ENCODE measurements at regions of chr18 and their contacts with region 1.

Region 1: GRCh38 chr18:67515945-67516538 is 478 bp downstream of the DSEL start:
- DNase-seq: peak; percentile 88
- H3K4me3 ChIP-seq: peak overlapping the region; percentile 85
- H3K27ac ChIP-seq: peak overlapping the region; percentile 90
- H3K4me1 ChIP-seq: peaks cover 8% of the 10 kb centered on the region
- H3K27me3 ChIP-seq: no peaks in the 10 kb centered on the region
- CTCF ChIP-seq: peak; percentile 79

Region 2: DNA sequence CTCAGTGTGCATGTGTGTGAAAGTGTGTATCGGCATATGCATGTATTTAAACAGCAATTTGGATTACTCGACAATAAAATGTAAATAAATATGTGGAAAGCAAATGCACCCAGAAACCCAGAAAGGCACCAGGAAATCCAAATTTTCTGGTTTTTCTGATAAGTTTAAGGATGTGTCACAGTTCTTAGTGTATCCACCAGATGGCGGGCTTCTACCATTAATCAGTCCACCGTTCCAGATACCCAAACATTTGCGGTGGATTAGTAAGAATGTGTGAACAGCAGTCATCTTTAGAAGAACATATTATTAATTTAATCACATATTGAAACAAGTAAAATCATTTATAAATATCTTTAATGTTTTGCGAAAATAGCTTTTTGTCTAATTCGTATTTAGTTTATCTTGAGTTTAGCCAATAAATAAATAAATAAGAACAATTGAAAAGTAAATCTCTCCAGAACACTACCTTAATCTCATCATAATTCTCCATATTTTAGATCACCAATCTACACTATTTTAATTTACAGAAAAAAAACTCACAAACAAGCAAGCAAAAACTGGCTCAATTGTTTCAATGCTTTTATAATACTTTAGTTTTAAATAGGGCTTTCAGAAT is 298.4 kb before region 1 on chr18:
- CTCF ChIA-PET with region 1: interaction called, 3 read pairs
- POLR2A ChIA-PET with region 1: no interaction called
- intact Hi-C with region 1: loop called (anchors 5 kb)
- DNase-seq: peak; percentile 77
- H3K4me3 ChIP-seq: no peak overlapping the region
- H3K27ac ChIP-seq: no peak overlapping the region
- H3K4me1 ChIP-seq: peaks cover 16% of the 10 kb centered on the region
- H3K27me3 ChIP-seq: no peaks in the 10 kb centered on the region
- CTCF ChIP-seq: peak; percentile 73

Region 3: DNA sequence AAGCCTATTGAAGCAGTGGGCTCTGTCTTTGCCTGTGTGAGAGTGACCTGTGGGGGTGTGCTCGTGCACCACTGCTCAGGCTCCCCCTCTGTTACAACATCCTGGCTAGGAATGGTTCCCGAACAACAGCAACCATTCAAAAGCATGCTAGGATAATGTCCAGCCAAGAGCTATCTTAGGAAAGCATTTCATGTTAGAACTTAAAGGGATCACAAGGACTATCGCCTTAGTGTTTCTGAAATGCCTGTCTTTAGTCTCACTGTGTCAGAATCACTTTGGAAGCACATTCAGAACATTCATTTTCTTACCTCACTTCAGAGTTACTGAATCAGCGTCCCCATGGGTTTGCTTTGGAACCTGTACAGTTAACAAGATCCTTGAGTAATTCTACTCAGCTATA is 135.4 kb after region 1 on chr18:
- CTCF ChIA-PET with region 1: no interaction called
- POLR2A ChIA-PET with region 1: no interaction called
- intact Hi-C with region 1: no loop called
- DNase-seq: no peak
- H3K4me3 ChIP-seq: no peak overlapping the region
- H3K27ac ChIP-seq: no peak overlapping the region
- H3K4me1 ChIP-seq: peaks cover 12% of the 10 kb centered on the region
- H3K27me3 ChIP-seq: no peaks in the 10 kb centered on the region
- CTCF ChIP-seq: no peak

Region 4: GRCh38 chr18:67665266-67665665 is 149.2 kb after region 1 on chr18:
- CTCF ChIA-PET with region 1: no interaction called
- POLR2A ChIA-PET with region 1: no interaction called
- intact Hi-C with region 1: loop called (anchors 5 kb)
- DNase-seq: no peak
- H3K4me3 ChIP-seq: no peak overlapping the region
- H3K27ac ChIP-seq: peak overlapping the region; percentile 69
- H3K4me1 ChIP-seq: peaks cover 24% of the 10 kb centered on the region
- H3K27me3 ChIP-seq: no peaks in the 10 kb centered on the region
- CTCF ChIP-seq: no peak

Region 5: DNA sequence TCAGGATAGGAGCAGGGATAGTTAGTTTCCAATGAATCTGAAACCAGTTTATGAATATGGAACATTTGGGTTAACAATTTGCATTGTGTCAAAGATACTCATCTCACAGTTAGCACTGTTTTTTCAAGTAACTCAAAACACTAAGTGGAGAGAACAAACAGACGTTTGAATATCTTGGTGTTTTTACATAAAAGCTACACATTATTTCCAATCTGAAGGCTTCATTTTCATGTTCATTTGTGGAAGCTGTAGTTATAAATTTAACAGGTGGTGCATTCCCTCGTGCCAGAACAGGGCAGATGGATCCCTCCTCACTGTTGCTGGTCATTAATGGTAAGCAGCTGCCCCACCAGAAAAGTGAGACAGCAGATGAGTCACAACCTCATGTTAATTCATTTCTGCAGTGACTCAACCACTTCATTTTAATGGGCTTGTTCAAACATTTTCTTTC is 911.9 kb after region 1 on chr18:
- CTCF ChIA-PET with region 1: interaction called, 12 read pairs
- POLR2A ChIA-PET with region 1: no interaction called
- intact Hi-C with region 1: no loop called
- DNase-seq: peak; percentile 89
- H3K4me3 ChIP-seq: no peak overlapping the region
- H3K27ac ChIP-seq: peak overlapping the region; percentile 47
- H3K4me1 ChIP-seq: peaks cover 20% of the 10 kb centered on the region
- H3K27me3 ChIP-seq: no peaks in the 10 kb centered on the region
- CTCF ChIP-seq: no peak

Region 6: GRCh38 chr18:68660354-68661183 is 1144.5 kb after region 1 on chr18:
- CTCF ChIA-PET with region 1: no interaction called
- POLR2A ChIA-PET with region 1: no interaction called
- intact Hi-C with region 1: loop called (anchors 10 kb)
- DNase-seq: peak; percentile 76
- H3K4me3 ChIP-seq: no peak overlapping the region
- H3K27ac ChIP-seq: no peak overlapping the region
- H3K4me1 ChIP-seq: peaks cover 18% of the 10 kb centered on the region
- H3K27me3 ChIP-seq: no peaks in the 10 kb centered on the region
- CTCF ChIP-seq: peak; percentile 72